ENCODE measurements at regions of chr3 and their contacts with region 1.

Region 1: DNA sequence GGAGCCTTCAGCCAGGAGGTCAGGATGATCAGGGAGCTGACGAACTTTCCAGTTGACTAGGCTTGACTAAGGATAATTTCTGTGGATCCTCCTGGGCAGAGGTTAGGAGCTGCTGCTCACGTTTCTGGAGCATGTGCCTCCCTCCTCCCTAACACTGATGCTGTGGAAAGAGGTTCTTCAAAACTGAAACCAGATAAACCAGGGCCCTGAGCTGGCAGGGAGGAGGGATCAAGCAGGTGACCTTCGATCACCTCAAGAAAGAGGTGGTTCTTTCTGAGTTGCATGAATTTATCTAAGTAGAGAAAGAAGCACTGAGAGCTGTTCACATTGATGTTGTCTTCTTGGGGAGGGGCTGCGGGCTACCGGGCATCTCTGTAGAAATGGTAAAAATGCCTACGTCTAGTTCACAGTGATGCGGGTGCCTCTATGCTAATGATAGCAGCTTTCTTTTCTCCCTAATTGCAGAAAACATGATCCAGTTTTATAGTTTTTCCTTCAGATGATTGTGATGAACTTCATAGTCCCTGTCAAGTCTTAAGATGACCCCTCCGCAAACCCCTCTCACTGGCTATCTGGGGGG is 332.7 kb upstream of the LRRFIP2 start:
- DNase-seq: no peak
- ATAC-seq: no peak
- H3K4me3 ChIP-seq: no peak overlapping the region
- H3K27ac ChIP-seq: no peak overlapping the region
- H3K4me1 ChIP-seq: no peaks in the 10 kb centered on the region
- H3K27me3 ChIP-seq: peaks cover 95% of the 10 kb centered on the region
- CTCF ChIP-seq: no peak

Region 2: GRCh38 chr3:37601832-37602231 is 94.8 kb after region 1 on chr3:
- CTCF ChIA-PET with region 1: no interaction called
- POLR2A ChIA-PET with region 1: no interaction called
- intact Hi-C with region 1: no loop called
- DNase-seq: no peak
- ATAC-seq: no peak
- H3K4me3 ChIP-seq: no peak overlapping the region
- H3K27ac ChIP-seq: no peak overlapping the region
- H3K4me1 ChIP-seq: no peaks in the 10 kb centered on the region
- H3K27me3 ChIP-seq: peaks cover 77% of the 10 kb centered on the region
- CTCF ChIP-seq: no peak

Region 3: DNA sequence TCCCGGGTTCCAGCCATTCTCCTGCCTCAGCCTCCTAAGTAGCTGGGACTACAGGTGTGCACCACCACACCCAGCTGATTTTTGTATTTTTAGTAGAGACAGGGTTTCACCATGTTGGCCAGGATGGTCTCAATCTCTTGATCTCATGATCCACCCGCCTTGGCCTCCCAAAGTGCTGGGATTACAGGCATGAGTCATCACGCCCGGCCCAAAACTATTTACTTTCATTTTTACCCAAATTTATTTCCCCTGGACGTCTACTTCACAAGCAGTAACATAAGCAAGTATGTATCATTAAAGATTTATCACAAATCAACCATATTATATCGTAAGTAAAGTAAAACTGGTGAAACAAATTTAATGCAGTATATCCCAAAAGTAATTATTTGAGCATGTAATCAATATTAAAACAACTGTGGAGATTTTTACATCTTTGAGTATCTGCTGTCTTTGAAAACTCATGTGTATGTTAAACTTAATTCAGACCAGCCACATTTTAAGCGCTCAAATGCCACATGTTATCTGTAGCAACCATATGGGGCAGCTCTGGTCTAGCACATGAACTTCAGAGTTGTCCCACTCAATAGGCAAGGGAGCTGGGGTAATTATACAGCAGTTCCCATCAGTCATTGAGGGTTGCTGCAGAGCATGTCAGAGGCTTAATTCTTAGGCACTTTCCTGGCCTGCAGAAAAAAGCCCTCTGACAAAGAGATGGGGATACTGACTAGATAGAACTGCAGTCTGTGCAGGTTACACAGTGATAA is 169.0 kb after region 1 on chr3:
- CTCF ChIA-PET with region 1: no interaction called
- POLR2A ChIA-PET with region 1: interaction called, 13 read pairs
- intact Hi-C with region 1: no loop called
- DNase-seq: no peak
- ATAC-seq: no peak
- H3K4me3 ChIP-seq: no peak overlapping the region
- H3K27ac ChIP-seq: no peak overlapping the region
- H3K4me1 ChIP-seq: no peaks in the 10 kb centered on the region
- H3K27me3 ChIP-seq: peaks cover 50% of the 10 kb centered on the region
- CTCF ChIP-seq: no peak

Measured in PC-3 (cell line).